GM12878 (cell line): ENCODE measurements at regions of chr7 and their contacts with region 1.

Region 1: DNA sequence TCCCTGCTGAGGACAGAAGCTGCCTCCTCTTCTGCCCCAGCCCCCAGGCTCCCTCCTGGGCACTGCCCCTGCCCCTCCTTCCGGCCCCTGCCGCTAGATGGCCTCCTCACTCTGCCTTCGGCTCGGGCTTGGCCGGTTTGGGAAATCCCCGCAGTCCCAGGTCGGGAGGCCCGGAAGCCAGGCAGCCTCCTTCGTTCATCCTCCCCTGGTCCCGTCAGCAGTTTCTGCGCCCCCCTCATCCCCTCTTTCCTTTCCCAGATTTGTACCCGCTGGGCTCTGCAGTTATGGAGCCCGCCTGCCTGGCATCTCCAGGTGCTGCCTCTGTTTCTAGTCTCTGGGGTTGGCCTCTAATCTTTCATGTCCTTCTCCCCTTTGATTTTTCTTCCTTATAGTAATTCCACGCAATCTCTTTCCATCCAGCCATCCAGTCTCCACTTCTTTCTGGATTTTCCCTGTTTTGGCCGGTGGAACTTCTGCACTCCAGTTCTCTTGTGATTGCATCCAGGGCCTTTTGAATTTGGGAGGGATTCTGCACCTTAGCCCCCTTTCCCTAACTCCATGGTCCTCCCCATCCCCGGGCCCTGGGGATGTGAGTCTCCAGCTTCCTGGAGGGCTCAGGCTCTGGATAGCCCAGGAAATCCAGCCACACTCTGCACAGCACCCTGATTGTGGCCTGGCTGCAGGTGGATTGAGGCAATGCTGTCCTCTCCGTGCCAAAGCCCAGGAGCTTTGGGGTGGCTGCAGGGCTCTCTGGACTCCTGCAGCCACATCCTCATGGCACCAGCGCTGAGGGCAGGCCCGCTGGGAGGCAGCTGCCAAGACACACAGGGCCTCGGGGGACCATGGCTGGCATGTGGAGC is 3.3 kb upstream of the SHH start:
- DNase-seq: no peak
- ATAC-seq: peak; percentile 99
- H3K4me3 ChIP-seq: no peak overlapping the region
- H3K27ac ChIP-seq: no peak overlapping the region
- H3K4me1 ChIP-seq: no peaks in the 10 kb centered on the region
- H3K27me3 ChIP-seq: peaks cover 6 to 8% of the 10 kb centered on the region in 2 experiments
- CTCF ChIP-seq: peak; percentile 79 to 97 (median 96); a peak in 5 of 6 replicates
- EP300 ChIP-seq: no peak
- POLR2A ChIP-seq: no peak
- RAD21 ChIP-seq: peak; percentile 97

Region 2: GRCh38 chr7:155456738-155457564 is 358.6 kb before region 1 on chr7:
- CTCF ChIA-PET with region 1: no interaction called
- POLR2A ChIA-PET with region 1: no interaction called
- RAD21 ChIA-PET with region 1: no interaction called
- SMC1A ChIA-PET with region 1: no interaction called
- in situ Hi-C with region 1: no loop called
- intact Hi-C with region 1: no loop called
- DNase-seq: no peak
- ATAC-seq: no peak
- H3K4me3 ChIP-seq: no peak overlapping the region
- H3K27ac ChIP-seq: no peak overlapping the region
- H3K4me1 ChIP-seq: no peaks in the 10 kb centered on the region
- H3K27me3 ChIP-seq: peaks cover 23 to 32% of the 10 kb centered on the region in 2 experiments
- CTCF ChIP-seq: no peak
- EP300 ChIP-seq: no peak
- POLR2A ChIP-seq: no peak
- RAD21 ChIP-seq: no peak

Region 3: DNA sequence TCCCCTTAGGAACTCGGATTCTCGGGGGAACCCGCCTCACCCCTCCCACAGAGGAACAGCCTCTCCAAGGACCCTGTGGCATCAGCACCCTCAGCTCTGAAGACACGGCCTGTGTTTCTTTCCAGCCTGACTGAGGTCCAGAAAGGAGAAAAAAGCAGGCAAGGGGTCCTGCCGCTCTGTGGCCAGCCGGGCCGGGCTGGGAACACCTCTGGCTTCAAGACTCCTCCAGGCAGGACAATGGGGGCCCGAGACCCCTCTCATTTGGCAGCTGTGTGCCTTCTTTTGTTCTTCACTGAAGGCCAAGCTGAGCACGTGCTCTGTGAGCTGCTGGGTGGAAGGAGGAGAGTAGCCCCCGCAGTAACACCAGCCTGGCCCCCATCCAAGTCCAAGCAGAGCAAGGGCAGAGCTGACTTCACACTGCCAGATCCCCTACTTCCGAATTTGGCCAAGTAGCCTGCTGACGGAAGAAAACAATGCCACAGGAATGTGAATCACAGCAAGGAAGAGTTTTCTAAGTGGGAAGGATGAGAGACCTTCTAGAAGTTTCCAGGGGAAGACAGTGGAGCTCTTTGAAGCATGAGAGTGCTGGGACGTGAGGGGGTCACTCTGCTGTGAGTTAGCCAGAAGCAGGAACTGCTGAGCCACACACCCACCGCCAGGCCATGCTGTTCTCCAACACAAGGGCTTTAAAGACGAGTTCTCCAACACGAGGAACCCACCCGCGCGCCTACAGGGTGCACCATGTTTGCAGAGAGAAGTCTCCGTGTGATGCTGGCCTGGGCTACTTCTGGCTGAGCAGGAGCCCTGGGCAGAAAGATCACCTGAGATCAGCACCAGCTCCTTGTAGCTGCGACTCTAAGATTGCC is 272.3 kb before region 1 on chr7:
- CTCF ChIA-PET with region 1: no interaction called
- POLR2A ChIA-PET with region 1: no interaction called
- RAD21 ChIA-PET with region 1: no interaction called
- SMC1A ChIA-PET with region 1: no interaction called
- in situ Hi-C with region 1: no loop called
- intact Hi-C with region 1: no loop called
- DNase-seq: no peak
- ATAC-seq: no peak
- H3K4me3 ChIP-seq: no peak overlapping the region
- H3K27ac ChIP-seq: no peak overlapping the region
- H3K4me1 ChIP-seq: no peaks in the 10 kb centered on the region
- H3K27me3 ChIP-seq: peaks cover 1 to 3% of the 10 kb centered on the region in 2 experiments; a peak in 3 of 4 replicates
- CTCF ChIP-seq: no peak
- EP300 ChIP-seq: no peak
- POLR2A ChIP-seq: no peak
- RAD21 ChIP-seq: peak; percentile 9; the same call in 1 of the 2 replicates

Region 4: DNA sequence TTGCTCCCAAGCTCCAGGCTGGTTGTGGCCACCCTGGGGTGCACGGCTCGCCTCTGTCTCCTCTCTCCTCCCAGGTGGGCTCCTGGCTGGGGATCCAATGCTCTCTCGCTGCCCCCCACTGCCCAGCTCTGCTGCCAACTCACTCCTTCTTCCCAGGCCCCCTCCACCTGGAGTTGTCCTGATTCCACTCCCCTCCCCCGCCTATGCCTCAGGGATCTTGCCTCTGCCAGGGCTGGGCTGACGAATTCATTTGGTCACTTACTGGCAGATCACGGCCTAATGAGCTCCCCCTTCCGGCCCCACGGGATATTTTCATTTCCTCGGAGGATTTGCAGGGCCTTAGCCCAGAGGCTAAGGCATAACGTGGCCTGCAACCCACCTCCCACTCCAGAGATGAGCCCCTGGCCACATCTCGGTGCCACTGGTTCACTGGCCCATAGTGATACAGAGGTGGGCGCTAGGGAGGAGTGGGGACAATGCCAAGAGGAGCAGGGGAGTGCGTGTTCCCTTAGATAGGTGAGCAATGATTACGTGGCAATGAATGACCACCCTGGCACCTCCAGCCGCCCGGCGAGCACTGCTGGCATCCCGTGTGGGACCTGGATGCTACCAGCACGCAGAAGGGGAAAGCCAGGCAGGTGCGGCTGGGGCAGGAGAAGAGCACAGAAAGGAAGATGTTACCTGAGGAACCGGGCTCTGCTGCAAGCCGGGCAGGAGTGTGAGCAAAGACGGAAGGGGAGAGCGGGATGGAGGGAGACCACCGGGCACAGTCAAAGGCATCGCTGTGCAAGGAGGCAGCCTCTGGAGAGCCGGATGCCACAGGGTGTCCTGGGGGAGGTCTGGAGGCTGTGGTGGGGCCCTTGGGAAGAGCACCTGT is 341.4 kb after region 1 on chr7:
- CTCF ChIA-PET with region 1: no interaction called
- POLR2A ChIA-PET with region 1: no interaction called
- RAD21 ChIA-PET with region 1: no interaction called
- SMC1A ChIA-PET with region 1: no interaction called
- in situ Hi-C with region 1: no loop called
- intact Hi-C with region 1: loop called (anchors 10 kb)
- DNase-seq: no peak
- ATAC-seq: peak; percentile 59
- H3K4me3 ChIP-seq: no peak overlapping the region
- H3K27ac ChIP-seq: no peak overlapping the region
- H3K4me1 ChIP-seq: no peaks in the 10 kb centered on the region
- H3K27me3 ChIP-seq: peaks cover 0 to under 1% of the 10 kb centered on the region in 2 experiments; a peak in 1 of 4 replicates
- CTCF ChIP-seq: peak in 2 of 3 experiments; percentile 24 to 34; a peak in 2 of 6 replicates
- EP300 ChIP-seq: no peak
- POLR2A ChIP-seq: no peak
- RAD21 ChIP-seq: 0 out of 2 replicates have a peak, but pooled peaks have one; percentile 15

Region 5: DNA sequence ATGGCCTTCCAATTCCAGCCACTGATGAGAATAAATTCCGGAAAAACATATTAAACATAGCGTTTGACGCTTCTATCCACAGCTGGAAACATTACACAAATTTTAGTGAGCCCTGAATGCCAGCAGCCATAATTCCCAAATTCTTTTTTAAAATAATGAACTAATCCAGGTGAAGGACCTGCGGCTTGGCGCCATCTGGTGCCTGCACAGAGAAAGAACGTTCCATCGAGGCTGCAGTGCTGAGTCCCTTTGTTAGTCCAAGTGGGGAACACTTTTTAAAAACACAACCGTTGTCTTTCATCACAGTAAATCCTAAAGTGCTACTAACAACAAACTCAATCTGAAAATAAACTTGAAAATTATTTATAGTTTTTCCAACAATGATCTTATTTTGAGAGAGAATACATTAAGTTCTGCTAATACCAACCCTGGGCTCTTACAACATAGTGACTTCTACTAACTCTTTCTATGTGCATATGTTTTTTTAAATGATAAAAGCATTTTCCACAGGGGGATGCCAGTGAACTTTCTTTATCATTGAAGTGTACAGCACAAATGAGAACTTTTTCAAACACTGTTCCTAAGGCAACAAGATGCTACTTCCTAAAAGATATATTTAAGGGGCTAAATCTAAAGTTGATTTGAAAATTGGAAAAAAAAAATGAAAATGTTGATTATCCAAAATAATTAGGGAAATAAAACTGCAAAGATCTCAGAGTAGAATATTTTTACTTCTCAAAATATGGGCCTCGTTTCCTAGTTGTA is 658.1 kb after region 1 on chr7:
- CTCF ChIA-PET with region 1: interaction called, 3 read pairs
- POLR2A ChIA-PET with region 1: no interaction called
- RAD21 ChIA-PET with region 1: no interaction called
- SMC1A ChIA-PET with region 1: interaction called, 5 read pairs
- in situ Hi-C with region 1: loop called (anchors 5 kb)
- intact Hi-C with region 1: loop called (anchors 1 kb)
- DNase-seq: no peak
- ATAC-seq: peak; percentile 56
- H3K4me3 ChIP-seq: no peak overlapping the region
- H3K27ac ChIP-seq: no peak overlapping the region
- H3K4me1 ChIP-seq: no peaks in the 10 kb centered on the region
- H3K27me3 ChIP-seq: no peaks in the 10 kb centered on the region; a peak in 1 of 4 replicates
- CTCF ChIP-seq: peak; percentile 64 to 69 (median 67); a peak in 5 of 6 replicates
- EP300 ChIP-seq: no peak
- POLR2A ChIP-seq: no peak
- RAD21 ChIP-seq: peak; percentile 71

Region 6: DNA sequence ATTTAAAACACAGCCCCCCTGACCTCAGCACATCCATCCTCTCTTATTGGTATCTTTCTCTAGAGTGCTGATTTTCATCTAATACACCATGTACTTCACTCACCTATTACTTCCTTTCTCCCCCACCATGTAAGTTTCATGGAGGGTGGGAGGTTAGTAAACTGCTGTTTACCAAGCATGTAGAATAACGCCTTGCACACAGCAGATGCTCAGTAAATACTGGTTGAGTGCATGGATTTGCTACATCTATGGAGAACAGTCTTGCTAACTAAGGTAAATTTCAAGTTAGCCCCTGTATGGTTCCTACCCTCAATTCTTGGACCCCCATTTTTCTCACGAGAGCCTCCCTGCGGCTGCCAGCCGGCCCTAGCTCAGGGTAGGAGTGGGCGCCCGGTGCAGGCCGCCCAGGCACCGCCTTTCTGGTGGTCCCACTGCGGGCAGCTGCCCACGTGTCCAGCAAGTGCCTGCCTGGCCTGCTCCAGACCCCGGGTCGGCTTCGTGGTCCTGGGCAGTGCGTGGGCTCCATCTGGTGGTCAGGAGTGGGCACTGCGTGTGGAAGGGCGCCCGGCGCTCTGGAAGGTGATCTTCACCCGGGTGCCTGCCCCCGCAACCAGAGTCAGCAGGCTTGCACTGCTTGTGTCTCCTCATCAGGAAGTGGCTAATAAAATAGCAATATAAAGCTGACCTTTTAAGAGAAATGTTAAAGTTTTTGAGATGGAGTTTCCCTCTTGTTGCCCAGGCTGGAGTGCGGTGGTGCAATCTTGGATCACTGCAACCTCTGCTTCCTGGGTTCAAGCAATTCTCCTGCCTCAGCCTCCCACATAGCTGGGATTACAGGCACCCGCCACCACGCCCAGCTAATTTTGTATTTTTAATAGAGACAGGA is 1457.9 kb after region 1 on chr7:
- CTCF ChIA-PET with region 1: interaction called, 3 read pairs
- POLR2A ChIA-PET with region 1: no interaction called
- RAD21 ChIA-PET with region 1: no interaction called
- SMC1A ChIA-PET with region 1: no interaction called
- in situ Hi-C with region 1: loop called (anchors 25 kb)
- intact Hi-C with region 1: no loop called
- DNase-seq: no peak
- ATAC-seq: peak; percentile 91
- H3K4me3 ChIP-seq: no peak overlapping the region
- H3K27ac ChIP-seq: no peak overlapping the region
- H3K4me1 ChIP-seq: no peaks in the 10 kb centered on the region
- H3K27me3 ChIP-seq: no peaks in the 10 kb centered on the region; a peak in 1 of 4 replicates
- CTCF ChIP-seq: peak; percentile 95 to 99 (median 96)
- EP300 ChIP-seq: no peak
- POLR2A ChIP-seq: no peak
- RAD21 ChIP-seq: peak; percentile 87